MCF 10A (cell line): ENCODE measurements at regions of chr10 and their contacts with region 1.

Region 1: DNA sequence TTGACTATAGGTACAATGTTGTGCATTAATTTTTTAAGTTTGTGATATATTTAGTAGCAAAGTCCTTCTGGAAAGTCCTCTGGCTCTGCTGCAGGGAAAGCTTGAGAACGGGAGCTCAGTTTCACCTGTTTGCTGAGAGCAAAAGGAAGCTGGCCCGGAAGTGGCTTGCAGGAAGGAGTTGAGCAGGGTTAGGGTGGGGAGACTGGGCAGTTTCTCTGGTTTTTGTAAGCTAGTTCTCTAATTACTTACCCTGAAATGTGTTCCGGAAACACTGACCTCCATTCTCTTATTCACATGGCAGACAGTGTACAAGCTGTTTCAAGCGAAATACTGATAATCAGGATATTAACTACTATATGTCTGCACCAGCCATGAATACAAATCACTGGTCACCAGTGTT is 22.3 kb downstream of the MAP3K8 start:
- DNase-seq: no peak
- H3K4me3 Mint-ChIP-seq: no peak overlapping the region
- H3K27ac Mint-ChIP-seq: peak overlapping the region; percentile 77
- H3K4me1 Mint-ChIP-seq: peaks cover 24% of the 10 kb centered on the region
- H3K27me3 Mint-ChIP-seq: no peaks in the 10 kb centered on the region
- CTCF ChIP-seq: no peak

Region 2: GRCh38 chr10:30027057-30028005 is 428.9 kb before region 1 on chr10:
- CTCF ChIA-PET with region 1: no interaction called
- POLR2A ChIA-PET with region 1: no interaction called
- intact Hi-C with region 1: no loop called
- DNase-seq: peak; percentile 88
- H3K4me3 Mint-ChIP-seq: peak overlapping the region; percentile 70
- H3K27ac Mint-ChIP-seq: peak overlapping the region; percentile 21
- H3K4me1 Mint-ChIP-seq: peaks cover 7% of the 10 kb centered on the region
- H3K27me3 Mint-ChIP-seq: no peaks in the 10 kb centered on the region
- CTCF ChIP-seq: peak; percentile 62

Region 3: DNA sequence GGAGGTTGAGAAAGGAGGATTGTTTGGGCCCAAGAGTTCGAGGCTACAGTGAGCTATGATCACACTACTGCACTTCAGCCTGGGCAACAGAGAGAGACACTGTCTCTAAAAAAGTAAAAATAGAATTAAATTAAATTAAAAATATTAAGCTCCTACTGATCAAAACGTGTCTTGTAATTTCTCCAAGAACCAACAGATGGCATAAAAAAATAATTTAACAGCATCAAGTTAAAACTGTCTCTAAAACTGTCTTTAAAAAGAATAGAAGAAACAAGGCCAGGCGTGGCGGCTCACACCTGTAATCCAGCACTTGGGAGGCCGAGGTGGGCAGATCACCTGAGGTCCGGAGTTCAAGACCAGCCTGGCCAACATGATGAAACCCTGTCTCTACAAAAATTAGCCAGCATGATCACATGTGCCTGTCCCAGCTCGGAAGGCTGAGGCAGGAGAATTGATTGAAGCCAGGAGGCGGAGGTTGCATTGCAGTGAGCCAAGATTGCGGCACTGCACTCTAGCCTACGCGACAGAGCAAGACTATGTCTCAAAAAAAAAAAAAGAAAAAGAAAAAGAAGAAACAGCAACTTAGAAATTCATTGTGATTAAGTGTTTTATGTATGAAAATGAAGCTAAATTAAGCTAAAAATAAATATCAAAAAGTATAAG is 131.7 kb before region 1 on chr10:
- CTCF ChIA-PET with region 1: no interaction called
- POLR2A ChIA-PET with region 1: no interaction called
- intact Hi-C with region 1: no loop called
- DNase-seq: no peak
- H3K4me3 Mint-ChIP-seq: no peak overlapping the region
- H3K27ac Mint-ChIP-seq: no peak overlapping the region
- H3K4me1 Mint-ChIP-seq: peaks cover 4% of the 10 kb centered on the region
- H3K27me3 Mint-ChIP-seq: no peaks in the 10 kb centered on the region
- CTCF ChIP-seq: peak; percentile 18

Region 4: DNA sequence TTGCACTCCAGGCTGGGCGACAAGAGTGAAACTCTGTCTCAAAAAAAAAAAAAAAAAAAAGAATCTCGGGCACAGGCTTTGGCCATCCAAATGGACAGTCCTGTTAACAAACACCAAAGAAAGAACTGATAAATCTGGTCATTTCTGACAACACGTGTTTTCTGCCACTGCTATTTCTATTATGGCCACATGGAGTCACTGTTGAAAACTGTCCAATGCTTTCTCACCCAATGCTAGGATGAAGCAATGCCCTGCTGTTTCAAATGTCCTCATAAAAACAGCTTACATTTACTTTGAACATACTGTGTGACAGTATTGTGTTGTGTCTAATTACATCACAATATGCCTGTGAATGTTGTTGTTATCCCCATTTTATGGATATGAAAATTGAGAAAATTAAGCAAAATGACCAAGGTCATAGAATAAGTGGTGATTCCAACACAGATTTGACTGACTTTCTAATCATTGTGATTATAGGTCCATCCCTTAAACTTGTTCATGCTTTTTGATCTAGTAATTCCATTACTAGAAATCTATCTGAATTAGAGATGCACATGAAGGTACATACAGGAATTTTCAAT is 42.2 kb before region 1 on chr10:
- CTCF ChIA-PET with region 1: interaction called, 5 read pairs
- POLR2A ChIA-PET with region 1: no interaction called
- intact Hi-C with region 1: loop called (anchors 1 kb)
- DNase-seq: peak; percentile 76
- H3K4me3 Mint-ChIP-seq: no peak overlapping the region
- H3K27ac Mint-ChIP-seq: no peak overlapping the region
- H3K4me1 Mint-ChIP-seq: no peaks in the 10 kb centered on the region
- H3K27me3 Mint-ChIP-seq: no peaks in the 10 kb centered on the region
- CTCF ChIP-seq: peak; percentile 62